Mammary epithelial cell (primary cell): ENCODE measurements at regions of chr9 and their contacts with region 1.

Region 1: DNA sequence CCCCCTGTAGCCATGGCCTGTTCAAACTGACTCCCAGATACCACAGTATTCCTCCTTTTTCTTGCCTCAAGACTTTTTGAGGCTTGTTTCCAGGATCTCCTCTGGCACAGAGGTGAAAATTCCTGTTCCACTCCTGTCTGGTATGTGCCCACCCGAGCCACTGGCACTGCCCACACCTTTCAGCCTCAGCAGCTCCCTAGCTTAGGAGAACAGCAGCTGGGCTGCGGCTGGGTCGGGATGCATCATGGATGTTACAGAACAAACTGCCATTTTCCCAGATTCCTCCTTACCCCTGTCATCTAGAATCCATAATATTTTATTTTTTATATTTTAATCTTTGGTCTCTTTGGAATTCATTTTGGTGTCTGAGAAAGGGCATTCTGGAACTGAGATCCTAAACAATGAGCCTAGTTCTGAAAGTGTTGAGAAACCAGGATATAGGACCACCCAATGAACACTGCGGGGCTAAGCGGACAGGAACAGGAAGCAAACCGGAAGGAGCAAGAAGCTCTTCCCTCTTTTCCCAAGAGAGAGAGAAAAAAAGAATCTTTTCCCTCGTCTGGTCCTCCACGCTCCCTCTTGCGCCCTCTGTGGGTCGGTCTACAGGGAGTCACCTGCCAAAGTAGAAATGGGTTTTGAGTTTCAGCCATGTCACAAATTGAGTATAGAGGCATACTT is 12.5 kb downstream of the OR2S2 start:
- DNase-seq: peak; percentile 63
- H3K4me3 ChIP-seq: peak overlapping the region; percentile 13 to 42 (median 30)
- H3K27ac ChIP-seq: no peak overlapping the region
- H3K4me1 ChIP-seq: peaks cover 6% of the 10 kb centered on the region
- H3K27me3 ChIP-seq: no peaks in the 10 kb centered on the region
- CTCF ChIP-seq: peak; percentile 91 to 95

Region 2: GRCh38 chr9:35029852-35030251 is 915.6 kb before region 1 on chr9:
- CTCF ChIA-PET with region 1: interaction called, 21 read pairs
- dilution Hi-C with region 1: no loop called
- in situ Hi-C with region 1: no loop called
- intact Hi-C with region 1: no loop called
- DNase-seq: no peak
- H3K4me3 ChIP-seq: no peak overlapping the region
- H3K27ac ChIP-seq: no peak overlapping the region
- H3K4me1 ChIP-seq: peaks cover 15% of the 10 kb centered on the region
- H3K27me3 ChIP-seq: no peaks in the 10 kb centered on the region
- CTCF ChIP-seq: no peak

Region 3: GRCh38 chr9:35689601-35690430 is 255.7 kb before region 1 on chr9 and contains the start of gene TPM2:
- CTCF ChIA-PET with region 1: interaction called, 11 read pairs
- dilution Hi-C with region 1: no loop called
- in situ Hi-C with region 1: no loop called
- intact Hi-C with region 1: no loop called
- DNase-seq: peak; percentile 55
- H3K4me3 ChIP-seq: peak within 1 kb of the TSS; percentile 47 to 70 (median 69)
- H3K27ac ChIP-seq: peak within 1 kb of the TSS; percentile 72
- H3K4me1 ChIP-seq: peaks cover 18% of the 10 kb centered on the region
- H3K27me3 ChIP-seq: no peaks in the 10 kb centered on the region
- CTCF ChIP-seq: no peak
- total RNA-seq, gene TPM2: 134 to 649 TPM

Region 4: GRCh38 chr9:35903049-35903448 is 42.4 kb before region 1 on chr9:
- CTCF ChIA-PET with region 1: interaction called, 5 read pairs
- dilution Hi-C with region 1: no loop called
- in situ Hi-C with region 1: no loop called
- intact Hi-C with region 1: loop called (anchors 1 kb)
- DNase-seq: peak; percentile 59
- H3K4me3 ChIP-seq: no peak overlapping the region
- H3K27ac ChIP-seq: no peak overlapping the region
- H3K4me1 ChIP-seq: peaks cover 38% of the 10 kb centered on the region
- H3K27me3 ChIP-seq: peaks cover 1% of the 10 kb centered on the region
- CTCF ChIP-seq: peak; percentile 61 to 67

Region 5: DNA sequence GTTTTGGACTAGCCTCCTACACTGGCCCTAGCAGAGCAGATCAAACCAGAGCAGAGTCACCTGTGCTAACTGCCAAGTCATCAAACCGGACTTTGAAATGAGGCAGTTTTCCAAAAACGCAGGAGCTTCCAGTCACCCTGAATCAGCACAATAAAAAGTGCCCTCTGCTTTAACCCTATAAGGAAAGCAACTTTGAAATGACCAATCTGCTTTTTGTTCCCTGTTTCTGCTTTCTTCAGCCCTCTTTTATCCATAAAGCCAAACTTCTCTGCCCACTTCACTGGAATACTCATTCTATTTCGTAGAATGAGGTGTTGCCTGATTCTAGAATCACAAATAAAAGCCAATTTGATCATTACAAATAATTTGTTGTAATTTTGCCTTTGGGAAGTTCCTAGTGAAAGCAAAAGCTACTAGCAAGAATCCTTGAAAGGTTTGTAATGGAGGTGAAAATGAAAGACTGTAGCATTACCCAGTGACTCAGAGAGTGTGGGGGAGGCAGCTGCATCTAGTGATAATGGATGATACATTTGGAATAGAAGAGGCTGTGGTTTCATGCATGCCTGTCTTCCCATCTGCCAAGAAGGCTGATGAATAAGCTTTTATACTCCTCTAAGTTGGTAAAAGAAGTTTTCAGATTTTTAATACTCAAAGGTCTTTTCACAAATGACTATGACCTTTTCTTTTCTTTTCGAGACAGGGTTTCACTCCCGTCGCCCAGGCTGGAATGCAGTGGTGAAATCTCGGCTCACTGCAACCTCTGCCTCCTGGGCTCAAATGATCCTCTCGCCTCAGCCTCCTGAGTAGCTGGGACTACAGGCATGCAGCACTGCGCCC is 21.3 kb before region 1 on chr9:
- CTCF ChIA-PET with region 1: no interaction called
- dilution Hi-C with region 1: no loop called
- in situ Hi-C with region 1: no loop called
- intact Hi-C with region 1: loop called (anchors 2 kb)
- DNase-seq: peak; percentile 91
- H3K4me3 ChIP-seq: peak overlapping the region in 2 of 3 experiments; percentile 25 to 36
- H3K27ac ChIP-seq: peak overlapping the region; percentile 90
- H3K4me1 ChIP-seq: peaks cover 28% of the 10 kb centered on the region
- H3K27me3 ChIP-seq: no peaks in the 10 kb centered on the region
- CTCF ChIP-seq: no peak

Region 6: GRCh38 chr9:36017278-36017677 is 71.8 kb after region 1 on chr9:
- CTCF ChIA-PET with region 1: no interaction called
- dilution Hi-C with region 1: no loop called
- in situ Hi-C with region 1: no loop called
- intact Hi-C with region 1: no loop called
- DNase-seq: no peak
- H3K4me3 ChIP-seq: no peak overlapping the region
- H3K27ac ChIP-seq: no peak overlapping the region
- H3K4me1 ChIP-seq: no peaks in the 10 kb centered on the region
- H3K27me3 ChIP-seq: no peaks in the 10 kb centered on the region
- CTCF ChIP-seq: no peak